ENCODE measurements at regions of chr5 and their contacts with region 1.

Region 1: DNA sequence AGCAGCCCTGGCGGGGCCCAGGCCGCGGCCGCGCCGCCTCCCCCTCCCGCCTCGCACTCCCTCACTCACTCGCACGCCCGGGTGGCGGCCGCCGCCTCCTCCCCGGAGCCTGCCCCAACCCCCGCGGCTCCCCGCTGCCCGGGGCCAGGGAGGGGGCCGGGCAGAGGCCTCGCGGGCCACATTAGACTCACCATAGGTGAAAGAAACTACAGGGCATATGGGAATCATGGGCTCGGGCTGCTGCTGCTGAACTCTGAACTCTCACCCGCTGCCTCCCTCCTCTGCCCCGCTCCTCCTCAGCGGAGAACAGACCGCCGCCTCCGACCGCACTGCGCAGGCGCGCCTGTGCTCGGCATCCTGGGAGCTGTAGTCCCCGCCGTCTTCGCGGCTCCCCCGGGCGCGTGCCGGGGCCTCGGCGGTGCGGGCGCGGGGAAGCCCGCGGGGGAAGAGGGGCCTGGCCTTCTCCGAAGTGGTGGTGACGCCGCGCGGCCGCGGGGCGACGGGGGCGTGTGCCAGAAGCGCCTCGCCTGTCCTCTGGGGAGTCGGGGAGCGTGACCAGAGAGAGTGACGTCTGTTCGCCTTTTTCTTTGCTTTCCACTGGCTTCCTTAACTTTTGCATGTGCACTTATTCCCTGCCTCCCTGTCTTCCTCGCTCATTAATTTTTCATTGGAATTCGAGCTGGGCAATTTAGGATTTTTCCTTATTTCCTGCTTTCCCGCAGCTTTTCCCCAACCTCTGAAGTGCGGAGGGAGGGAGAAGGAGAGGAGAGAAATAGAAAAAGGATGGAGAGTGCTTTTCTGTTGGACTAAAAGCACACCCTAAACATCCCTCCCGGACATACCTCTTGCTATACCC is at the start of gene ZFR:
- DNase-seq: peak; percentile 90 to 93 (median 90)
- H3K4me3 ChIP-seq: peak within 1 kb of the TSS; percentile 65 to 90 (median 76)
- H3K4me3 Mint-ChIP-seq: peak within 1 kb of the TSS; percentile 84 to 93
- H3K27ac ChIP-seq: peak within 1 kb of the TSS; percentile 64 to 89
- H3K27ac Mint-ChIP-seq: peak within 1 kb of the TSS; percentile 87 to 95 (median 92)
- H3K4me1 ChIP-seq: peaks cover 39 to 47% of the 10 kb centered on the region in 2 donors
- H3K4me1 Mint-ChIP-seq: peaks cover 39% of the 10 kb centered on the region
- H3K27me3 ChIP-seq: no peaks in the 10 kb centered on the region
- H3K27me3 Mint-ChIP-seq: peaks cover 2 to 4% (median 2%) of the 10 kb centered on the region in 3 donors
- CTCF ChIP-seq: no peak
- polyA plus RNA-seq, gene ZFR: 29.8 to 81.8 (median 62.3) TPM

Region 2: GRCh38 chr5:32355686-32356085 is 89.0 kb before region 1 on chr5:
- intact Hi-C with region 1: no loop called
- DNase-seq: no peak
- H3K4me3 ChIP-seq: no peak overlapping the region
- H3K4me3 Mint-ChIP-seq: no peak overlapping the region
- H3K27ac ChIP-seq: no peak overlapping the region
- H3K27ac Mint-ChIP-seq: no peak overlapping the region
- H3K4me1 ChIP-seq: peaks cover 0 to 5% of the 10 kb centered on the region in 2 donors
- H3K4me1 Mint-ChIP-seq: peaks cover 5% of the 10 kb centered on the region
- H3K27me3 ChIP-seq: no peaks in the 10 kb centered on the region
- H3K27me3 Mint-ChIP-seq: peaks cover 0 to 2% (median 0%) of the 10 kb centered on the region in 3 donors
- CTCF ChIP-seq: no peak

Region 3: GRCh38 chr5:32390819-32391591 is 53.7 kb before region 1 on chr5:
- intact Hi-C with region 1: loop called (anchors 5 to 10 kb)
- DNase-seq: peak; percentile 80 to 92 (median 90)
- H3K4me3 ChIP-seq: no peak overlapping the region
- H3K4me3 Mint-ChIP-seq: peak overlapping the region in 1 of 2 donors; percentile 35
- H3K27ac ChIP-seq: peak overlapping the region; percentile 52 to 85
- H3K27ac Mint-ChIP-seq: peak overlapping the region; percentile 78 to 98 (median 98)
- H3K4me1 ChIP-seq: peaks cover 41 to 49% of the 10 kb centered on the region in 2 donors
- H3K4me1 Mint-ChIP-seq: peaks cover 39% of the 10 kb centered on the region
- H3K27me3 ChIP-seq: no peaks in the 10 kb centered on the region
- H3K27me3 Mint-ChIP-seq: no peaks in the 10 kb centered on the region
- CTCF ChIP-seq: no peak

Region 4: DNA sequence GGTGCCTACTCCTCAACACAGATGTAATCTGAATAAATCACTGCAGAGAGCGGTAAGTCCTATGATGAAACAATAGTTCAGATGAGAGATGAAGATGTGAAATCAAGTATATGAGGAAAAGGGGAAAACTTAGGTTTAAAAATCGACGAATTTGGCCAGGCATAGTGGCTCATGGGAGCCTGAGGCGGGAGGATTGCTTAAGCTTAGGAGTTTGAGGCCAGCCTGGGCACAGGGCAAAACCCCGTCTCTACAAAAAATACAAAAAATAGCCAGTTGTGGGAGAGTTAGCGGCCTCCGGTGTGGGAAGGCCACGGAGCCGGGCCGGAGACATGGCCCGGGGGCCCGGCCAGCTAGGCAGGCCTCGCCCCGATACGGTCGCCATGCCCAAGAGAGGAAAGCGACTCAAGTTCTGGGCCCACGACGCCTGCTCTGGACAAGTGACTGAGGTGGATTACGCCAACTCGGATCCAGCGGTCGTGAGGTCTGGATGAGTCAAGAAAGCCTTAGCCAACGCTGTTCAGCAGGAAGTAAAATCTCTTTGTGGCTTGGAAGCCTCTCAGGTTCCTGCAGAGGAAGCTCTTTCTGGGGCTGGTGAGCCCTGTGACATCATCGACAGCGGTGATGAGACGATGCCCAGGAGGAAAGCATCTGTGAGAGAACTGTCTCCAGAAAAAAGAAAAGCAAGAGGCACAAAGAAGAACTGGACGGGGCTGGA is 77.9 kb after region 1 on chr5:
- intact Hi-C with region 1: loop called in 1 of 2 experiments (anchors 10 kb)
- DNase-seq: peak; percentile 95 to 98 (median 98)
- H3K4me3 ChIP-seq: no peak overlapping the region
- H3K4me3 Mint-ChIP-seq: peak overlapping the region in 1 of 2 donors; percentile 36
- H3K27ac ChIP-seq: peak overlapping the region; percentile 86 to 89
- H3K27ac Mint-ChIP-seq: peak overlapping the region; percentile 86 to 97 (median 96)
- H3K4me1 ChIP-seq: peaks cover 50 to 51% of the 10 kb centered on the region in 2 donors
- H3K4me1 Mint-ChIP-seq: peaks cover 51% of the 10 kb centered on the region
- H3K27me3 ChIP-seq: no peaks in the 10 kb centered on the region
- H3K27me3 Mint-ChIP-seq: peaks cover 0 to 10% (median 2%) of the 10 kb centered on the region in 3 donors
- CTCF ChIP-seq: no peak

Measured in CD14-positive monocyte (primary cell).